Activated CD8-positive, alpha-beta T cell treated with anti-CD3 and anti-CD28 coated beads for 36 hours (primary cell): ENCODE measurements at regions of chr11 and their contacts with region 1.

Region 1: DNA sequence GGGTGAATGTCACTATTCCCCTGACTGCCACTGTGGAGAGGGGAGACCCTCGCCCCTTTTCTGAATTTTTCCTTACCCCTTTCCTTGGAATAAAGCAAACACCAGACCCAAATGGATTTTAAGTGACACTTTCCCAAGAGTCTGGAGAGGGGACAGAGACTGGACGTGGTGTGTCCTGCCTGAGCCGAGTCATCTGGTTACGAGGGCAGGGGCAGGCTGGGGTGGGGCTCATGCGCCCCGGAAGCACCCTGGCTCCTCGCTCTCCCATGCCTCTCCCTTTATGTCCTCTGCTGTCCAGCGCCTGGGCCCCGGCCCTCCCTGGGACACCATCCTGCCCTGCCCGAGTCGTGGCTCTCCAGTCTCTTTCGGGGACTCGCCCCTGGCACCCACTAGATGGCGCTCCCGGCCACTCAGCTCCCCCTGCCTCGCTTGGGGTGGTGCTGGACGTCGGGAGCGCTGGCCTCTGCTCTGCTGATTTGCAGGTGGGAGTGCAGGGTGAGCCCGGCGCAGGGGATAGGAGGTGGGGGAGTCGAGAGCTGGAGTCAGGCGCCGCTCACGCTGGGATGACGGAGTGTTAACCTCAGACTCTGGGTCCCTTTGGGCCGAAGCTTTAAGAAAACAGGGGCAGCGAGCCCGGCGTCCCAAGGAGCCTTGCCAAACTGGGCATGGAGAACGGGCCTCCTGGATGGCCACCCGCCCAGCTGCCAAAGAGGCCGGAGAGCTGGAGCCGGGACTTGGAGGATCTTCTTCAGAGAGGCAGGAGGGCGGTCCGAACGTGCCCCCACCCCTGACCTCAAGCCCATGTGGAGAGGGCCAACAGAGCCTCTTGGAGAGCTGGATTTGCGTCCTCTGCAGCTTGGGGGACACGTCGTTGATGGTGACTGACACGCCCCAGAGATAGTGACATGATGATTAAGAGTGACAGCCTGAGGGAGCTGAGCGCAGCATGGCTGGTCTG is 89.9 kb downstream of the RPS6KA4 start:
- DNase-seq: peak; percentile 82
- ATAC-seq: peak; percentile 80
- H3K4me3 Mint-ChIP-seq: peak overlapping the region; percentile 61
- H3K27ac Mint-ChIP-seq: no peak overlapping the region
- H3K4me1 Mint-ChIP-seq: peaks cover 9% of the 10 kb centered on the region
- H3K27me3 Mint-ChIP-seq: peaks cover 7% of the 10 kb centered on the region
- CTCF ChIP-seq: peak; percentile 81

Region 2: GRCh38 chr11:64100360-64100759 is 348.5 kb before region 1 on chr11:
- CTCF ChIA-PET with region 1: no interaction called
- POLR2A ChIA-PET with region 1: no interaction called
- intact Hi-C with region 1: no loop called
- DNase-seq: no peak
- ATAC-seq: no peak
- H3K4me3 Mint-ChIP-seq: no peak overlapping the region
- H3K27ac Mint-ChIP-seq: no peak overlapping the region
- H3K4me1 Mint-ChIP-seq: no peaks in the 10 kb centered on the region
- H3K27me3 Mint-ChIP-seq: no peaks in the 10 kb centered on the region
- CTCF ChIP-seq: no peak

Region 3: GRCh38 chr11:64358907-64359711 is 89.8 kb before region 1 on chr11 and contains the start of gene RPS6KA4:
- CTCF ChIA-PET with region 1: interaction called, 14 read pairs
- POLR2A ChIA-PET with region 1: no interaction called
- intact Hi-C with region 1: no loop called
- DNase-seq: peak; percentile 64
- ATAC-seq: peak; percentile 68
- H3K4me3 Mint-ChIP-seq: peak within 1 kb of the TSS; percentile 79
- H3K27ac Mint-ChIP-seq: peak within 1 kb of the TSS; percentile 87
- H3K4me1 Mint-ChIP-seq: peaks cover 48% of the 10 kb centered on the region
- H3K27me3 Mint-ChIP-seq: no peaks in the 10 kb centered on the region
- CTCF ChIP-seq: no peak
- total RNA-seq, gene RPS6KA4: 24.6 to 26.0 TPM

Region 4: DNA sequence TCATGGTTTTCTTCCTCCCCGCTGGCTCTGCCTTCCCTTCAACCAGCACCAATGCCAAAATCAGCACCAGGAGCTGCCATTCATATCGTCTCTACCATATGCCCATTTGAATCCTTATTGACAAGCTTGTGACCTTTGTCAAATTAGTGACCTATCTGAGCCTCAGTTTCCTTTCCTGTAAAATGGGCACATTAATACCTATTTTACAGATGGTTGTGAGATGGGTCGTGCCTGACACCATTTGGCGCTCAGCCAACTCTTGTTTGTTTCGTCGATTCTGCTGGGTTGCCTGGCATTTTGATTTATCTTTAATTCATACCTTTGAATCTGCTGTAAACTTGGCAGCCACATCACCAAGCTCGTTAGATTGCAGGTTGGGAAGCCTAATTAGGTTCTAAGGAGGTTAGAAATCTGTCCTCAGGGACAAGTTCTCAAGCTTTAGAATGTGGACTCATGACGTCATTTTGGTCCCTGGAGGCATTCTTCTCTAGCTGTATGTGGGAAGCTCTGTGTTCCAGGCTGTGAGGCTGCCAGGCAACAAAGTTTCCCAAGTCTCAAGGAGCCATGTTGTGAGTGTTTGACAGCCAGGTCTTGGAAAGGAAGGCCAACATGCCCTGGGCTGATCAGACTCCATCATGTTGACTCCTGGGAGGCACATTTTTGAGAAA is 28.9 kb before region 1 on chr11:
- CTCF ChIA-PET with region 1: interaction called, 19 read pairs
- POLR2A ChIA-PET with region 1: no interaction called
- intact Hi-C with region 1: no loop called
- DNase-seq: no peak
- ATAC-seq: no peak
- H3K4me3 Mint-ChIP-seq: no peak overlapping the region
- H3K27ac Mint-ChIP-seq: no peak overlapping the region
- H3K4me1 Mint-ChIP-seq: peaks cover 7% of the 10 kb centered on the region
- H3K27me3 Mint-ChIP-seq: no peaks in the 10 kb centered on the region
- CTCF ChIP-seq: no peak

Region 5: GRCh38 chr11:64466115-64466718 is 17.3 kb after region 1 on chr11:
- CTCF ChIA-PET with region 1: interaction called, 23 read pairs
- POLR2A ChIA-PET with region 1: interaction called, 3 read pairs
- intact Hi-C with region 1: no loop called
- DNase-seq: no peak
- ATAC-seq: no peak
- H3K4me3 Mint-ChIP-seq: no peak overlapping the region
- H3K27ac Mint-ChIP-seq: no peak overlapping the region
- H3K4me1 Mint-ChIP-seq: peaks cover 2% of the 10 kb centered on the region
- H3K27me3 Mint-ChIP-seq: no peaks in the 10 kb centered on the region
- CTCF ChIP-seq: no peak

Region 6: GRCh38 chr11:64644647-64645275 is 195.9 kb after region 1 on chr11:
- CTCF ChIA-PET with region 1: interaction called, 45 read pairs
- POLR2A ChIA-PET with region 1: no interaction called
- intact Hi-C with region 1: loop called (anchors 5 kb)
- DNase-seq: peak; percentile 23
- ATAC-seq: peak; percentile 61
- H3K4me3 Mint-ChIP-seq: no peak overlapping the region
- H3K27ac Mint-ChIP-seq: no peak overlapping the region
- H3K4me1 Mint-ChIP-seq: peaks cover 1% of the 10 kb centered on the region
- H3K27me3 Mint-ChIP-seq: peaks cover 26% of the 10 kb centered on the region
- CTCF ChIP-seq: peak; percentile 18